Keratinocyte (primary cell): ENCODE measurements at regions of chrX and their contacts with region 1.

Region 1: DNA sequence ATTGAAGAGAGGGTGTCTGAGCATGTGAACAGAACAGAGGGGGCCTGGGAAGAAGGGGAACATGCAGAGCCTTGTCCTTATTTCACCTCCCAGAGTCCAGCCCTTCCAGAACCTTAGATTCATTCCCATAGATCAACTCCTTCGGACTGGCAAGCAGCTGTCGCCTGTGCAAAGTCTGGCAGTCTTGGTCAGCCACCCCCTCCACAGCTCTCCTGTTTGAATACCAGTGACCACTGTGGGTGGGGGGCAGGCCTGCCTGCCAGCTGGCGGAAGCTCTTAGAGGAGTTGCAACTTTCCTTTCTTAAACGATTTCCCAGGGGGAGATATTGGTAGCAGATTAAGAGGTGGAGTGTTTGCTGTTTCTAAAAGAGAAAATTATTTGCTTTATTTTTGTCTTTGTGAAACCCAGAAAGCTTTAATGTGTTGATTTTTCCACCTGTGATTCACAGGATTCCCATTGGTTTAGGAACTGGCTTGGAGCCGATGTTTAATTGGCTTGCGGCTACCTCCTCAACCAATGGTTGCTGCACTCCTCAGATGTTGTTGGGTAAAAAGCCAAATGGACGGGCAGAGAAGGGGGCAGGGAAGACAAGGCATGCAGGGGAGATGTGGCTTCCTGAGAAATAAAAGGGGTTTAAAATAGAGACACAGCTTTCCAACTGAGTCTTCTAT is 62.2 kb upstream of the PRPS1 start:
- DNase-seq: no peak
- H3K4me3 ChIP-seq: no peak overlapping the region
- H3K27ac ChIP-seq: no peak overlapping the region
- H3K4me1 ChIP-seq: no peaks in the 10 kb centered on the region
- H3K27me3 ChIP-seq: peaks cover 3% of the 10 kb centered on the region
- CTCF ChIP-seq: no peak

Region 2: DNA sequence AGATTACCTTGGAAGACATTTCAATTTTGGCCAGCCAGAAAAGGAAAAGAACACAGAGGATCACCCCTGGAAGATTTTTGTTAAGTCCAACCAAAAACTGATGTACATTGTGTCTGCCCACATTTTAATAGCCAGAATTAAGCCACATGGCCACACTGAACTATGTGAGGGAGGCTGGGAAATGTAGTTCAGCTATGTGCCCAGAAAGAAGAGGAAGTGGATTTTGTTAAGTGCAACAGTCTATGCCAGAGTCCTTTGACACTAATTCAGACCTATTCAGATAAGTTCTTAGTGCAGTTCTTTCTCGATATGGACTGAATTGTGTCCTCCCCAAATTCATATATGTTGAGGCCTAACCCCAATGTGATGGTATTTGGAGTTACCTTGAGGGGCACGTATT is 80.7 kb after region 1 on chrX:
- dilution Hi-C with region 1: loop called (anchors 5 kb)
- DNase-seq: no peak
- H3K4me3 ChIP-seq: no peak overlapping the region
- H3K27ac ChIP-seq: no peak overlapping the region
- H3K4me1 ChIP-seq: no peaks in the 10 kb centered on the region
- H3K27me3 ChIP-seq: no peaks in the 10 kb centered on the region
- CTCF ChIP-seq: no peak